ENCODE measurements at regions of chr21 and their contacts with region 1.

Region 1: GRCh38 chr21:42652527-42653230 is 742 bp upstream of the PDE9A start:
- DNase-seq: peak in 9 of 10 donors; percentile 33 to 94 (median 64)

Region 2: GRCh38 chr21:42737951-42738590 is 85.4 kb after region 1 on chr21:
- intact Hi-C with region 1: loop called (anchors 2 kb)
- DNase-seq: peak in 4 of 10 donors; percentile 28 to 89 (median 82)

Region 3: GRCh38 chr21:42862774-42863503 is 210.3 kb after region 1 on chr21:
- intact Hi-C with region 1: loop called (anchors 10 kb)
- DNase-seq: peak in 3 of 10 donors; percentile 56 to 81 (median 67)